ENCODE measurements at regions of chr16 and their contacts with region 1.

Region 1: GRCh38 chr16:22374311-22375116 is at the start of gene CDR2:
- DNase-seq: peak; percentile 98
- H3K4me3 Mint-ChIP-seq: peak within 1 kb of the TSS; percentile 95
- H3K27ac Mint-ChIP-seq: peak within 1 kb of the TSS; percentile 93
- H3K4me1 Mint-ChIP-seq: peaks cover 36% of the 10 kb centered on the region
- H3K27me3 Mint-ChIP-seq: peaks cover 5% of the 10 kb centered on the region
- total RNA-seq, gene CDR2: 42.9 and 46.8 TPM in 2 replicates

Region 2: DNA sequence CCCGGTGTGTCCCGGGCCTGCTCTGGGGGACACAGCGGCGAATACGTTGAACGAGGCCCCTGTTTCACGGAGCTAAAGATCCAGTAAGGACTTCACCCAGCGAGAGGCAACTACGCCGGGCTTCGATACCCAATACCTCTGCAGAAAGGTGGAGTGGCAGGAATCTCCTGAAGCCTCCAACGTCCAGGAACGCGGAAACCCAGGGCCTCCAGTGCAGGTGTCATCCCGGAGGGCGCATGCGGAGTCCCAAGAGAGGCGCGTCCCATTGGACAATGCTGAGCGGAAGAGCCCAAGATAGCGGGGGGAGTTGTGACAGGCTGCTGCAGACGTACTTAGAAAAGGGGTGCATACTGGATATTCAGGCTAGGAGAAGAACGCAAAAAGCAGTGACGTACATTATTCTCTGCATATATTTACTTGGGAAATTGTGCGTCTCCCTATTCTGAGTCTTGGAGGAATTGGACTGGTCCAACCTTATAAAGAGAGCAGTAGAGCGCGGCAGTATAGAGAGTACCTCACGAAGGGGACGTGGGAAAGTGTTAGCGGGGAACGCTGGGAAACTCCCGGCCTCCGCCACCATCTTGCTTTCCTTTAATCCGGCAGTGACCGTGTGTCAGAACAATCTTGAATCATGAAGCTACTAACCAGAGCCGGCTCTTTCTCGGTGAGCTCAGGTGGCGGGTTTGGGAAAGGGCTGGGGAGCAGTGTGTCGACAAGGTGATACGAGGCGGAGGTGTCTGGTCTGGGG is 421.5 kb before region 1 on chr16 and contains the start of gene UQCRC2:
- intact Hi-C with region 1: loop called (anchors 5 kb)
- DNase-seq: peak; percentile 85
- H3K4me3 Mint-ChIP-seq: peak within 1 kb of the TSS; percentile 96
- H3K27ac Mint-ChIP-seq: peak within 1 kb of the TSS; percentile 97
- H3K4me1 Mint-ChIP-seq: peaks cover 38% of the 10 kb centered on the region
- H3K27me3 Mint-ChIP-seq: no peaks in the 10 kb centered on the region
- total RNA-seq, gene UQCRC2: 269 and 272 TPM in 2 replicates

Region 3: GRCh38 chr16:22141746-22142145 is 232.8 kb before region 1 on chr16:
- intact Hi-C with region 1: no loop called
- DNase-seq: no peak
- H3K4me3 Mint-ChIP-seq: no peak overlapping the region
- H3K27ac Mint-ChIP-seq: no peak overlapping the region
- H3K4me1 Mint-ChIP-seq: no peaks in the 10 kb centered on the region
- H3K27me3 Mint-ChIP-seq: peaks cover 7% of the 10 kb centered on the region

Region 4: DNA sequence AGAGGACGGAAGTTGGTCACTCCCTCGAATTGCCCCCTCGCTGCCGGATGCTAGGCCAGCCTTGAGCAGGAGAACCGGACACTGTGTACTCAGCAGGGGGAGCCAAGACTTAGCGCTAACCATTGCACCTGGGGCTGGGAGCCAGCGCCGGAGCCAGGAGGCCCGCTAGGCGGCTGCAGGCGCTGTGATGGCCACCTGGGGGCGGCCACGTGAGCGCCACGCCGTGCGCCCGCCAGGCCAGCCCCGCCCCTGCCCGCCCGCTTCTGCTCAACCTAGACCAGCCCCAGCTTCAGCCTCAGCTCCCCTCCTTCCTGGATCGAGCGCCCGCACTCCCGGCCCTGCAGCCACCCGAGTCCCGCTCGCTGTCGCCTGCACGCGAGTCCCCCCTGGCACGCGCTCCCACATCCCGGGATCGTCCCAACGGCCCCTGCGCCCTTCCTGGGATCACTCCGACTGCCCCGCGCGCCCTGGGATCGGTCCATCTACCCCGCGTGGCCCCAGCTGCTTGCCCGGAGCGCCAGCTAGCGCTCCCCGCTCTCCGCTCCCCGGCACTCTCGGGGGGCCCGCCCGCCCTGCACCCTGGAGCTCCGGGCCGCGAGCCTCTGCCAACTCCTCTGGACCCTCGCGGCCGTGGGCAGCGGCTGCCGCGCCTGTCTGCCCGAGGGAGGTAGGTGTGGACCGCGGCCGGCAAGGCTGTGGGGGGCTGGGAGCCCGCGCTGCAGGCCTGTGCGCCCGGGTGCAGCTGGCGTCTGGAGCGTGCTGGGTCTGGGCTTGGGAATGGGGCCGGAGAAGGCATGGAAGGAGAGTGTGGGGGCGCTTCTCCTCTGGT is 168.3 kb before region 1 on chr16 and contains the start of gene EEF2K:
- intact Hi-C with region 1: no loop called
- DNase-seq: peak; percentile 76
- H3K4me3 Mint-ChIP-seq: peak within 1 kb of the TSS; percentile 96
- H3K27ac Mint-ChIP-seq: peak within 1 kb of the TSS; percentile 91
- H3K4me1 Mint-ChIP-seq: peaks cover 41% of the 10 kb centered on the region
- H3K27me3 Mint-ChIP-seq: no peaks in the 10 kb centered on the region
- total RNA-seq, gene EEF2K: 40.4 and 41.0 TPM in 2 replicates

Region 5: DNA sequence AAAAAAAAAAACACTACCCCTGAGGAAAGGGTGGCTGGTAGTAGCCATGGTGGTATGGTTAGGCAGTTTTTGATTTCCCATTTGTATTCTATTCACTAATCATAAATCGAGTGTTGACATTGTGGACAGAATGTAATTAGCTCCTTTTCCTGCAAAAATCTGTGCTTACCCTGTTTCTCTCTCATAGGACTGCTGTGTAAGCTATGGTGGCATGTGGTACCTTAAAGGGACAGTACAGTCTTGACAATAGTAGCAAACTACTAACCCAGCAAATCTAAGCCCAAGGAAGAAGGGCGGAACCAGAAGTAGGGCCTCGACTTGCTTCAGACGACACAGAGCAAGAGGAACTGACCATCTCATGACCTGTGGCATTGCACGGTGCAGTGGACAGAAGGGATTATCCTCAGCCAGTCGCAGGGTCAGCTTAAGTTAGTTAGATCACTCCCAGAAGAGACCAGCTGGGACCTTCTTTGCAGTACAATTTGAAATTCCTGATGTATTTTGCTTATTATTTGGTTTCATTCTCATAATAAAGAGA is 41.0 kb before region 1 on chr16:
- intact Hi-C with region 1: loop called (anchors 5 kb)
- DNase-seq: no peak
- H3K4me3 Mint-ChIP-seq: no peak overlapping the region
- H3K27ac Mint-ChIP-seq: no peak overlapping the region
- H3K4me1 Mint-ChIP-seq: peaks cover 8% of the 10 kb centered on the region
- H3K27me3 Mint-ChIP-seq: no peaks in the 10 kb centered on the region

Region 6: GRCh38 chr16:22353191-22353919 is 21.2 kb before region 1 on chr16:
- intact Hi-C with region 1: loop called (anchors 1 kb)
- DNase-seq: no peak
- H3K4me3 Mint-ChIP-seq: no peak overlapping the region
- H3K27ac Mint-ChIP-seq: peak overlapping the region; percentile 95
- H3K4me1 Mint-ChIP-seq: peaks cover 41% of the 10 kb centered on the region
- H3K27me3 Mint-ChIP-seq: no peaks in the 10 kb centered on the region

Measured in activated T-helper 2 cell treated with anti-CD3 and anti-CD28 coated beads, Interferon-gamma antibody, Interleukin-2, Interleukin-4, amounts not matched to agents 10 μg/mL and 5 μg/mL and 100 μg/mL, durations not matched to agents 14 hours and 24 hours and 36 hours (primary cell).